Esophagus muscularis mucosa (tissue), 4 donors: ENCODE measurements at regions of chr12 and their contacts with region 1.

Region 1: GRCh38 chr12:3202734-3203446 is 125.7 kb downstream of the TSPAN9 start:
- DNase-seq: no peak
- H3K4me3 ChIP-seq: no peak overlapping the region
- H3K27ac ChIP-seq: no peak overlapping the region
- H3K4me1 ChIP-seq: peaks cover 50 to 69% (median 62%) of the 10 kb centered on the region in 4 donors
- H3K27me3 ChIP-seq: peaks cover 0 to 19% (median 0%) of the 10 kb centered on the region in 4 donors
- CTCF ChIP-seq: peak; percentile 83 to 98 (median 84)
- EP300 ChIP-seq: no peak
- POLR2A ChIP-seq: no peak

Region 2: GRCh38 chr12:3060778-3061458 is 142.0 kb before region 1 on chr12:
- intact Hi-C with region 1: no loop called
- DNase-seq: no peak
- H3K4me3 ChIP-seq: no peak overlapping the region
- H3K27ac ChIP-seq: no peak overlapping the region
- H3K4me1 ChIP-seq: peaks cover 0 to 3% (median 3%) of the 10 kb centered on the region in 4 donors
- H3K27me3 ChIP-seq: peaks cover 0 to 4% (median 0%) of the 10 kb centered on the region in 4 donors
- CTCF ChIP-seq: no peak
- EP300 ChIP-seq: no peak
- POLR2A ChIP-seq: no peak

Region 3: DNA sequence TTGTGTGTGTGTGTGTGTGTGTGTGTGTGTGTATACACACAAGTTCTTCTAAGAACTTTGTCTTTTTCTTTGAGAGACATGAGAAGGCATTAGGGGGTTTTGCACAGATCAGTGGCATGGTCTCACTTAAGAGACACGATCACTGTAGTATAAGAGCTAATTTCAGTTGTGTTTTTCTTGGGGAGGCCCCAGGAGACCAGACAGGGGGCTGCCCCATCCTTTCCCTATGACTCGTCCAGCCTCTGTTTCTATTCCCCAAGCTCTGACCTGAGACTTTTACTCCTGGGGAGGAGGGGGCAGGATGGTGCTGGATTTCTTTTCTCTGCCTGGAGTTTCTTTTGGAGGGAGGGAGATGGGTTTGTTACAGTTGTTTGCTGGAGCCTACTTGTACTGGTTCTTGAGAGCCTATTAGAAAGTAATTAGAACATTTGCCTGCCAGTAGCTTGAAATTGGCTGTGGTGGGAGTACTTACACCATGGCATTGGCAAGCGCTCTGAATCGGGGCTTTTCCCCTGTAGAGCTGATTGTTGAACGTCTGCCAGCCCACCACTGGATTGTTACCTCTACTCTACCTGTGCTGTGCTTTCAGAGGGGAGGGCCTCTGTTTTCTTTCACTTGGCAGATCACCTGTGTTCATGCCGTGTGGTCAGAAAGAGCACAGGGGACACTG is 16.2 kb before region 1 on chr12:
- intact Hi-C with region 1: no loop called
- DNase-seq: no peak
- H3K4me3 ChIP-seq: no peak overlapping the region
- H3K27ac ChIP-seq: no peak overlapping the region
- H3K4me1 ChIP-seq: peaks cover 15 to 56% (median 23%) of the 10 kb centered on the region in 4 donors
- H3K27me3 ChIP-seq: no peaks in the 10 kb centered on the region
- CTCF ChIP-seq: no peak
- EP300 ChIP-seq: no peak
- POLR2A ChIP-seq: no peak

Region 4: DNA sequence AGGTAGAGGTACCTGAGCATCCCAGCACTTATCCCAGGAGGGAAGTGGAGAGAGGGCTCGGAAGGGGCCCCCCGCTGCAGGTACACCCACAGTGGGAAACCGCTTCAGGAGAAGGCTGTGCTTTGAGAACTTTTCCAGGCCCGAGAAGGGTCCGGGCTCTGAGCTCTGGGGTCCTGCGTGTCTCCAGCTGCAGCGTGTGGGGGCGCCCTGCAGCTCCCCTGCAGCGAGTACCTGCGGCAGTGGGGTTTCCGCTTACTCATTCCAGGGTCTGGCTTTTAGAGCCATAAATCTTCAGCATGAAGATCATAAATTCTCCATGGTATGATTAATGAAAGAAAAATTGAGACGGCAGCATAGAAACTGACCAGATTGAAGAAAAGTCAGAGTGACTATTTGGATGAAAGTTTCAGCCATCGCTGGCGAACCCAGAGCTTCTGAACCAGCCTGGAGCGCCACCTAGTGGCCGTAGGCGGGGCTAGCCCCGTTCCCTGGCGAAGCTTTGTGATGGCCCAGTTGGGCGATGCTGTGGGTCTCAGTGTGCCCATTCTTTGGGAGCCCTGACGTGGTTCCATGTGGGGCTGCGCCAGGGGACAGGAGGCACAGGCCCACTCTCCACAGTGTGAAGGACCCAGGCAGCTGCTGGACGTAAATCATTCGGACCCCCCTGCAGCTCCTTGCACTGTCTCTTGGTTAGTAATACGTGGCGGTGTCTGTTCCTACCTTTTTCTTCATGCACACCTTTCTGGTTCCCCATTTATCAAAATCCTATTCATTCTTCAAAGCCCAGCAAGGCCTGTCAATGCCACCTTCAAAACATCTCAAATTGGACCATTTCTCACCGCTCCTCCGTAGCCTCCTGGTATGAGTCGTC is 72.5 kb after region 1 on chr12:
- intact Hi-C with region 1: loop called (anchors 5 kb)
- DNase-seq: no peak
- H3K4me3 ChIP-seq: no peak overlapping the region
- H3K27ac ChIP-seq: no peak overlapping the region
- H3K4me1 ChIP-seq: peaks cover 17 to 40% (median 35%) of the 10 kb centered on the region in 4 donors
- H3K27me3 ChIP-seq: no peaks in the 10 kb centered on the region
- CTCF ChIP-seq: peak in 2 of 3 experiments; percentile 94 to 97
- EP300 ChIP-seq: no peak
- POLR2A ChIP-seq: no peak